A673 (cell line): ENCODE measurements at regions of chrX and their contacts with region 1.

Region 1: GRCh38 chrX:30181353-30181752 is 34.0 kb upstream of the MAGEB2 start:
- DNase-seq: no peak
- H3K4me3 ChIP-seq: no peak overlapping the region
- H3K27ac ChIP-seq: no peak overlapping the region
- H3K4me1 ChIP-seq: no peaks in the 10 kb centered on the region
- H3K27me3 ChIP-seq: no peaks in the 10 kb centered on the region
- CTCF ChIP-seq: no peak

Region 2: DNA sequence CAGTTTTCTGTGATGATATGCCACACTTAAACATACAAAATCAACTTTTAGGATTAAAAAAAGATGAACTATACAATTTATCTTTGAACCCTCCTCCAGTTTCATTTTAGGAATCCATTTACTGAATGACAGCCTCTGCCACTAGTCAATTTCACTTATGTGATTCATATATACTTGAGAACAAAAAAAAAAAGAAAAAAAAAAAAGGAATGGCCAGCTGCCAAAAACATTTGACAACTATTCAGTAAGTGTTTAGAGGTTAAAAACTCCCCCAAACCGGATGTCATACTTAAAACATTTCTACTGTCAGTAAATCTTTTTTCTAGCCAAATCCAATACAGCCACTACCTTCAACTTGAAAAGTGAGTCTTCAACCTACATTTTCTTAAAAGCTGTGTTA is 232.7 kb before region 1 on chrX:
- CTCF ChIA-PET with region 1: no interaction called
- POLR2A ChIA-PET with region 1: no interaction called
- intact Hi-C with region 1: loop called (anchors 10 kb)
- DNase-seq: peak; percentile 64
- H3K4me3 ChIP-seq: no peak overlapping the region
- H3K27ac ChIP-seq: no peak overlapping the region
- H3K4me1 ChIP-seq: no peaks in the 10 kb centered on the region
- H3K27me3 ChIP-seq: no peaks in the 10 kb centered on the region
- CTCF ChIP-seq: no peak

Region 3: GRCh38 chrX:30248854-30249253 is 67.5 kb after region 1 on chrX:
- CTCF ChIA-PET with region 1: no interaction called
- POLR2A ChIA-PET with region 1: no interaction called
- intact Hi-C with region 1: no loop called
- DNase-seq: no peak
- H3K4me3 ChIP-seq: no peak overlapping the region
- H3K27ac ChIP-seq: no peak overlapping the region
- H3K4me1 ChIP-seq: no peaks in the 10 kb centered on the region
- H3K27me3 ChIP-seq: no peaks in the 10 kb centered on the region
- CTCF ChIP-seq: no peak